ENCODE measurements at regions of chr19 and their contacts with region 1.

Region 1: GRCh38 chr19:54851353-54851752 is 1.1 kb downstream of the KIR3DL2 start:
- DNase-seq: no peak
- H3K4me3 ChIP-seq: no peak overlapping the region
- H3K27ac ChIP-seq: no peak overlapping the region
- H3K4me1 ChIP-seq: no peaks in the 10 kb centered on the region
- H3K27me3 ChIP-seq: no peaks in the 10 kb centered on the region
- CTCF ChIP-seq: no peak
- POLR2A ChIP-seq: no peak

Region 2: DNA sequence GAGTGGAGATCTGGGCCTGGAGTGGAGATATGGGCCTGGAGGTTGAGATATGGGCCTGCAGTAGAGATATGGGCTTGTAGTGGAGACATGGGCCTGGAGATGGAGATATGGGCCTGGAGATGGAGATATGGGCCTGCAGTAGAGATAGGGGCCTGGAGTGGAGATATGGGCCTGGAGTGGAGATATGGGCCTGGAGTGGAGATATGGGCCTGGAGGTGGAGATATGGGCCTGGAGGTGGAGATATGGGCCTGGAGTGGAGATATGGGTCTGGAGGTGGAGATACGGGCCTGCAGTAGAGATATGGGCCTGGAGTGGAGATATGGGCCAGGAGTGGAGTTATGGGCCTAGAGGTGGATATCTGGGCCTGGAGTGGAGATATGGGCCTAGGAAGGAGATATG is 112.6 kb before region 1 on chr19:
- intact Hi-C with region 1: loop called in 1 of 2 experiments (anchors 5 kb)
- DNase-seq: no peak
- H3K4me3 ChIP-seq: no peak overlapping the region
- H3K27ac ChIP-seq: no peak overlapping the region
- H3K4me1 ChIP-seq: no peaks in the 10 kb centered on the region
- H3K27me3 ChIP-seq: no peaks in the 10 kb centered on the region
- CTCF ChIP-seq: no peak
- POLR2A ChIP-seq: no peak

Region 3: GRCh38 chr19:55005684-55006488 is 154.5 kb after region 1 on chr19:
- intact Hi-C with region 1: no loop called
- DNase-seq: peak in 5 of 7 donors; percentile 10 to 54 (median 20)
- H3K4me3 ChIP-seq: peak overlapping the region in 1 of 4 donors; percentile 19
- H3K27ac ChIP-seq: peak overlapping the region in 1 of 5 donors; percentile 47
- H3K4me1 ChIP-seq: no peaks in the 10 kb centered on the region
- H3K27me3 ChIP-seq: no peaks in the 10 kb centered on the region
- CTCF ChIP-seq: no peak
- POLR2A ChIP-seq: no peak

Measured in adrenal gland (tissue), 19 donors.